ENCODE measurements at regions of chr9 and their contacts with region 1.

Region 1: DNA sequence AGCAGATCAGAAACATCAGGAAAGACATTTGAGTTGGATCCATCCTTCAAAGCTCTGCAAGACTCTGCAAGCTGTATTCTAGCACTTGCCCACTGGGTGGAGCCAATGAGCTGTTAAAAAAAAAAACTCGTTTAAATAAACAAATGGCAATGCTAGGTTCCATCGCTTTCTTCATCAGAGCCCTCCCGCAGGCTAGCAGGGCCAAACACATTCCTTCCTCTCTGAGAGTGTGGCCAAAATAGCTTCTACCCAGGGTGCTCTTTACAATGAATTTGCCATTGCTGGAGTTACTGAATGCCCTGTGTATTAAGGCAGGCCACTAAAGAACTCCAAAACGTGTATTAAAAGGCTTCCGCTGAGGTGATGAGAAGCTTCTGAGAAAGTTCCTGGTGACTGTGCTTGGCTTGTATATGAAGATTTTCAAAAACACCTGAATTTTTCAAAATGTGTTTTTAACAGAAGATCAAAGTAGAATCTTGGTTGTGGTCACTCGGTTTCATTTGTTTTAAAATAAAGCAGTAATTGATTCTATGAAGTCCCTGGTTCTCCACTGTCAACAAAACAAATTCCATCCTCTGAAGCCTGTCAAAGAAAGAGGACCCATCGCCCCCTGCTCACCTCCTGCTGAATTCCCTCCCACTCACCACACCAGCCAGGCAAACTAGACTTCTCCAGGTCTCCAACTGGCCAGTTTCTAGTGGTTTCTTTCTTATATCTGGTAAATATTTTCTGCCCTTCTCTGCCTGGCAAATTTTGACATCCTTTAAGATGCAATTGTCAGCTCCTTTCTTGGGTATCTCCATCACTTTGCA is 36.5 kb upstream of the EQTN start:
- DNase-seq: peak; percentile 82
- H3K4me3 ChIP-seq: no peak overlapping the region
- CTCF ChIP-seq: peak; percentile 85

Region 2: GRCh38 chr9:27003426-27004077 is 329.9 kb before region 1 on chr9:
- in situ Hi-C with region 1: no loop called
- DNase-seq: no peak
- H3K4me3 ChIP-seq: no peak overlapping the region
- CTCF ChIP-seq: no peak

Region 3: DNA sequence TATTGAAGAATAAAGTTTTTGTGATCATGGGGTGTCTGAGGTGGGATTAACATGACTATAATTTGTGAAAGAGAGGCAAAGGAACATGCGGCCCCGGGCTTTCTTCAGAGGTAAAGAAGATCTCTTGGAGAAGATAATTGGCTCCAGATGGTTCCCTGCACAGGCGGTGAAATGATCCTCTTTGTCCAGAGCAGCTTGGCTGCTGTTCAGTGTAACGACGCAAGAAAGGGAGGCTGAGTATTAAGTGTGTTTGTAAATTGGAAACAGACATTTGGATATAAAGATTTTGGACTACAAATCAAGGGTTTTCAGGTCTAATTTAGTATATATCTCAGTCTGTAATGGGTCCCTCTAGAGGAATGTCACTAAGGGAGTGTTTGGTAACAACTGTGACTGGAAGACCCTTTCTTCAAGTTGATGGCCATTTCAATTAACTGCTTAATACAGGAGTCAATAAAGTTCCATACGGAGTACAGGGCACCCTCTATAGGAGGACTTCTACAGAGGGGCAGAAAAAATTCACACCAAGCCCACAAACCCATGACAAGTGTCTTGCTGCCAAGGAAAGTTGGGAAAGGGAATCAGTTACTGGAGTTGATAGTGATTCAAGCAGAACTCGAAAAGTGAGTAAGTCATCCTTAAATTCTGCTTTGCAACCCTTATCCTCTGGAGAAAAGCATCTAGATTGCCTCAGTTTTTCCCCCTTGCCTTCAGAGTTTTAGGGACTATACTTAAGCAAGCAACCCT is 40.6 kb before region 1 on chr9:
- in situ Hi-C with region 1: no loop called
- DNase-seq: no peak
- H3K4me3 ChIP-seq: no peak overlapping the region
- CTCF ChIP-seq: no peak

Region 4: GRCh38 chr9:27548055-27548741 is 214.8 kb after region 1 on chr9:
- in situ Hi-C with region 1: loop called (anchors 10 kb)
- DNase-seq: no peak
- H3K4me3 ChIP-seq: no peak overlapping the region
- CTCF ChIP-seq: peak; percentile 41